Gastrocnemius medialis (tissue), 4 donors: ENCODE measurements at regions of chr9 and their contacts with region 1.

Region 1: DNA sequence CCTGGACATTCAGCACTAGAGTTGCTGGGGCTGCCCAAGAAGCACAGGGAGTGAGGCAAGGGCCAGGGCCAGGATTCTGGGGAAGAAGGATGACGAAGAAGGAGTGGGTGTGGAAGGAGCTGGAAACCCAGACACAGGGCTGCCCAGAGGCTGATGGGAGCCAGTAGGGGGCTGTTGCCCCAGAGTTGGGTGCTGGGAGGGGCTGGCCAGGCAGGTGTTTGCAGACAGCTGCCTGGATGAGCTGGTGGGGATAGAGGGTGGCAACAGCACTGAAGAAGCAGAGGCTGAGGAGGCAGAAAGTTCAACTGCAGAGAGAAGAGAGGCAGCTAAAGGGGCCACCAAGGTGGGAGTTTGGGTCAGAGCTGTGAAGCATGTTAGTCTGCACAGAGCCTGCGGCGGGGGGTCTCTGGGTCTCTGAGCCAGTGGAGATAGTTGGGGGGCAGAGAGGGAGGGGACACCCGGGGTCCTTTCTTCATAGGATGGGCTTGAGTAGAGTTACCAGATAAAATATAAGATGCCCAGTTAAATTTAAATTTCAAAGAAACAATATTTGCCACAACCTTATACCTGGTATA is 2.5 kb upstream of the AQP7 start:
- DNase-seq: no peak
- ATAC-seq: no peak
- H3K4me3 ChIP-seq: no peak overlapping the region
- H3K27ac ChIP-seq: peak overlapping the region; percentile 4 to 48 (median 26)
- H3K4me1 ChIP-seq: peaks cover 24% of the 10 kb centered on the region in 2 donors
- H3K27me3 ChIP-seq: no peaks in the 10 kb centered on the region
- CTCF ChIP-seq: no peak
- POLR2A ChIP-seq: no peak

Region 2: GRCh38 chr9:33255006-33255775 is 149.7 kb before region 1 on chr9:
- in situ Hi-C with region 1: no loop called
- intact Hi-C with region 1: no loop called
- DNase-seq: no peak
- ATAC-seq: no peak
- H3K4me3 ChIP-seq: no peak overlapping the region
- H3K27ac ChIP-seq: peak overlapping the region in 2 of 4 donors; percentile 7 to 74
- H3K4me1 ChIP-seq: peaks cover 15 to 27% of the 10 kb centered on the region in 2 donors
- H3K27me3 ChIP-seq: no peaks in the 10 kb centered on the region
- CTCF ChIP-seq: no peak
- POLR2A ChIP-seq: no peak

Region 3: GRCh38 chr9:33306037-33306436 is 98.8 kb before region 1 on chr9:
- in situ Hi-C with region 1: no loop called
- intact Hi-C with region 1: no loop called
- DNase-seq: no peak
- ATAC-seq: peak in 1 of 2 donors; percentile 51
- H3K4me3 ChIP-seq: no peak overlapping the region
- H3K27ac ChIP-seq: peak overlapping the region in 3 of 4 donors; percentile 31 to 55 (median 47)
- H3K4me1 ChIP-seq: peaks cover 5 to 14% of the 10 kb centered on the region in 2 donors
- H3K27me3 ChIP-seq: no peaks in the 10 kb centered on the region
- CTCF ChIP-seq: no peak
- POLR2A ChIP-seq: no peak

Region 4: GRCh38 chr9:33466565-33467495 is 62.0 kb after region 1 on chr9:
- in situ Hi-C with region 1: no loop called
- intact Hi-C with region 1: loop called (anchors 5 kb)
- DNase-seq: peak in 1 of 2 donors; percentile 42
- ATAC-seq: peak in 1 of 2 donors; percentile 77
- H3K4me3 ChIP-seq: no peak overlapping the region
- H3K27ac ChIP-seq: no peak overlapping the region
- H3K4me1 ChIP-seq: no peaks in the 10 kb centered on the region
- H3K27me3 ChIP-seq: no peaks in the 10 kb centered on the region
- CTCF ChIP-seq: peak; percentile 86 to 90 (median 89)
- POLR2A ChIP-seq: no peak